GM12878 (cell line): ENCODE measurements at regions of chr11 and their contacts with region 1.

Region 1: GRCh38 chr11:115930886-115931547 is 426.8 kb upstream of the CADM1 start:
- DNase-seq: no peak
- ATAC-seq: peak; percentile 56
- H3K4me3 ChIP-seq: no peak overlapping the region
- H3K27ac ChIP-seq: peak overlapping the region; percentile 95
- H3K4me1 ChIP-seq: peaks cover 59% of the 10 kb centered on the region
- H3K27me3 ChIP-seq: no peaks in the 10 kb centered on the region
- CTCF ChIP-seq: no peak
- EP300 ChIP-seq: no peak; a peak in 1 of 4 replicates
- POLR2A ChIP-seq: no peak
- RAD21 ChIP-seq: no peak

Region 2: DNA sequence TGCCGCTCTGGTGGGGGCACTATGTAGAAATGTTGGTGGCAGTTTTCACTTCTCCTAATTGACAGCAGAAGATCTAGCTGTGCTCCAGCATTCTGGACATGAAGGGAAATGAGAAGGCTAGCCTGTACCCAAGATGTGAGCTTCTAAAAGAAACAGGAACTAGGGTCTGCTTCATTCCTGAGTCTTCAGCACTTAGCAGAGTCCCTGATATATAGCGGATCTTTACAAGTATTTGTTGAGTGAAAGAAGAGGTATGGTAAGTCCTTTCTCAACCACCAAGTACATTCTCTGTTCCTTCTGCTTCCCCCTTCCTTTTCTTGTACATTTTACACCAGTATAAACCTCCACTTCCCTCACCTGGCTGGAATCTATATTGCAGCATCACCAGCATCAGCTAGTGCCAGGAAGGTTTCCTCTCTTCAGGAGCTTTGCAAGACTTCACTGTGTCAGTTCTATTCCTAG is 18.5 kb before region 1 on chr11:
- CTCF ChIA-PET with region 1: interaction called, 61 read pairs
- POLR2A ChIA-PET with region 1: interaction called, 86 read pairs
- RAD21 ChIA-PET with region 1: interaction called, 140 read pairs
- SMC1A ChIA-PET with region 1: interaction called, 207 read pairs
- in situ Hi-C with region 1: no loop called
- intact Hi-C with region 1: no loop called
- DNase-seq: no peak
- ATAC-seq: peak; percentile 90
- H3K4me3 ChIP-seq: no peak overlapping the region; the same call in 1 of the 2 replicates
- H3K27ac ChIP-seq: peak overlapping the region; percentile 56
- H3K4me1 ChIP-seq: peaks cover 24% of the 10 kb centered on the region
- H3K27me3 ChIP-seq: no peaks in the 10 kb centered on the region
- CTCF ChIP-seq: peak; percentile 42 to 67 (median 48); a peak in 5 of 6 replicates
- EP300 ChIP-seq: no peak
- POLR2A ChIP-seq: no peak
- RAD21 ChIP-seq: peak; percentile 85

Region 3: DNA sequence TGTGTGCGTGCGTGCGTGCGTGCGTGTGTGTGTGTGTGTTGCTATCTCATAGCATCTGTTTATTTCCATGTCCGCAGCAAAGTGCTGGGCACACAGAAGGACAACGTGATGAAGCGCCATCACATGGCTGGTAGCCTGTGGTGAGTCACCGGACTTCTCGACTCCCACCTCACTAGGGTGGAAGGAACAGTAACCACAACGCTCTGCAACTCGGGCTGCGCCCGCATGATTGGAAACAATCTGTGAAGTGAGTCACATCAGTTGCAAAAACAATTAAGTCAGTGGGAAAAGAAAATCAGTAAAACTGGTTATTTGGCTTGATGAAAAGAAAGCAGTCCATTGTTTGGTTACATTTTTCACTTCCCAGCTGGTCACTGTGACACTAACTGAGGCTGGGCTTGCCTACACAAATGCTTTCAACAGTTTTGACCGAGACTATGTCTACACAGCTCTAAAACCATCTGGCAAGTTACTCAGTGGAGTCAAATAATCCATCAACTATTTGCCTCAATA is 10.5 kb after region 1 on chr11:
- CTCF ChIA-PET with region 1: interaction called, 22 read pairs
- POLR2A ChIA-PET with region 1: interaction called, 28 read pairs
- RAD21 ChIA-PET with region 1: interaction called, 94 read pairs
- SMC1A ChIA-PET with region 1: interaction called, 94 read pairs
- in situ Hi-C with region 1: no loop called
- intact Hi-C with region 1: no loop called
- DNase-seq: no peak
- ATAC-seq: no peak
- H3K4me3 ChIP-seq: no peak overlapping the region
- H3K27ac ChIP-seq: no peak overlapping the region
- H3K4me1 ChIP-seq: peaks cover 7% of the 10 kb centered on the region
- H3K27me3 ChIP-seq: no peaks in the 10 kb centered on the region
- CTCF ChIP-seq: no peak
- EP300 ChIP-seq: no peak
- POLR2A ChIP-seq: no peak
- RAD21 ChIP-seq: no peak

Region 4: GRCh38 chr11:115984228-115984627 is 53.2 kb after region 1 on chr11:
- CTCF ChIA-PET with region 1: interaction called, 39 read pairs
- POLR2A ChIA-PET with region 1: interaction called, 3 read pairs
- RAD21 ChIA-PET with region 1: interaction called, 5 read pairs
- SMC1A ChIA-PET with region 1: interaction called, 27 read pairs
- in situ Hi-C with region 1: no loop called
- intact Hi-C with region 1: no loop called
- DNase-seq: no peak
- ATAC-seq: no peak
- H3K4me3 ChIP-seq: no peak overlapping the region
- H3K27ac ChIP-seq: no peak overlapping the region
- H3K4me1 ChIP-seq: no peaks in the 10 kb centered on the region
- H3K27me3 ChIP-seq: no peaks in the 10 kb centered on the region
- CTCF ChIP-seq: no peak
- EP300 ChIP-seq: no peak
- POLR2A ChIP-seq: no peak
- RAD21 ChIP-seq: peak; percentile 24; the same call in 1 of the 2 replicates

Region 5: DNA sequence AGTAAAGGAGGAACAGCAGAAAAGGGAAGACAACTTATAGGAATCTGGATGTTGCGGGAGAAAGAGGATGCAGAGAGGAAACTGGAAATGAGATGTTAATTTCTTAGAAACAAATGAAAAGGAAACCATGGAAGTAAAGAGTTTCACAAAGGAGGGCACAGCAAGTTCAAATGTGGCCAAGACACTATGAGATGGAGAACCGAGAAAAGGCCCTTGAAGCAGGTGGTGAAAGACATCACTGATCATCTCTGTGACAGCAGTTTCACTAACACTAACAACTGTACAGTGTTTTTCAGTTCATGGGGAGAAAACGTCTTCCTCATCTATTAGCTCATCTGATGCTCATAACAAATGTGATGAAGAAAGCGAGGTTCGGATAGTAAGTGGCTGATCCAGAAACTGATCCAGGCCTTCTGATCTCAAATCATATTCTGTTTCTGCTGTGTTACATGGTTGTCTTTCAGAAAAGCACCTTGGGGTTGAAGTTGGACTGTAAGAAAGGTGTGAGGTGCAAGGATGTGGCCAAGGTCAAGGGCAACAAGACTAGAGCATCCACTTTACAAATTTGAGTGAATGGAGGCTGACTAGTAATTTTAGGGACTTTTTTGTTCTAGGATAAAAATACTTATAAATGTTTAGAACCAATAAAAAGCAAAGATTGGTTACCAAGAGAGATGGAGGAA is 65.2 kb after region 1 on chr11:
- CTCF ChIA-PET with region 1: interaction called, 39 read pairs
- POLR2A ChIA-PET with region 1: interaction called, 4 read pairs
- RAD21 ChIA-PET with region 1: interaction called, 23 read pairs
- SMC1A ChIA-PET with region 1: interaction called, 57 read pairs
- in situ Hi-C with region 1: loop called (anchors 5 kb)
- intact Hi-C with region 1: loop called (anchors 1 kb)
- DNase-seq: peak; percentile 89
- ATAC-seq: peak; percentile 96
- H3K4me3 ChIP-seq: no peak overlapping the region
- H3K27ac ChIP-seq: peak overlapping the region; percentile 79
- H3K4me1 ChIP-seq: peaks cover 25% of the 10 kb centered on the region
- H3K27me3 ChIP-seq: no peaks in the 10 kb centered on the region
- CTCF ChIP-seq: no peak
- EP300 ChIP-seq: peak; percentile 94 to 95; a peak in 3 of 4 replicates
- POLR2A ChIP-seq: no peak
- RAD21 ChIP-seq: no peak

Region 6: DNA sequence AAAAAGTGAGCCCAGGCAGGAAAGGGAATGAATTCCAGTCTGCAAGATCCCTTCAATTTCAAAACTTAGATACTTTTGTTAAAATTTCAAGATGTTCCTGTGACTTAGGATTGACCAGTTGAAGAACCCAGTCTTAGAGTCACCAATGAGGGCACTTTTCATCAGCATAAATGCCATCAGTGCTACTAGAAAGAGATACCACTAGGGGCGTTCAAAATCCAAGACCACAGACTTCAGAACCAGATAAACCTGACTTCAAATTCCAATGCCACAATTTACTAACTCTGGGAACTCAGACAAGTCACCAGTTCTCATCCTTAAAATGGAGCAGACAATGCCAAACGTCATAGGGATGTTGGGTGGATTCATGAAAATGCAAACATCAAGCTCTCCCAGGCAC is 318.5 kb after region 1 on chr11:
- CTCF ChIA-PET with region 1: no interaction called
- POLR2A ChIA-PET with region 1: no interaction called
- RAD21 ChIA-PET with region 1: no interaction called
- SMC1A ChIA-PET with region 1: no interaction called
- in situ Hi-C with region 1: no loop called
- intact Hi-C with region 1: no loop called
- DNase-seq: no peak
- ATAC-seq: no peak
- H3K4me3 ChIP-seq: no peak overlapping the region
- H3K27ac ChIP-seq: no peak overlapping the region
- H3K4me1 ChIP-seq: no peaks in the 10 kb centered on the region
- H3K27me3 ChIP-seq: peaks cover 2 to 9% of the 10 kb centered on the region in 2 experiments; a peak in 3 of 4 replicates
- CTCF ChIP-seq: no peak; a peak in 1 of 6 replicates
- EP300 ChIP-seq: no peak
- POLR2A ChIP-seq: no peak
- RAD21 ChIP-seq: no peak